GM12878 (cell line): ENCODE measurements at regions of chr5 and their contacts with region 1.

Region 1: DNA sequence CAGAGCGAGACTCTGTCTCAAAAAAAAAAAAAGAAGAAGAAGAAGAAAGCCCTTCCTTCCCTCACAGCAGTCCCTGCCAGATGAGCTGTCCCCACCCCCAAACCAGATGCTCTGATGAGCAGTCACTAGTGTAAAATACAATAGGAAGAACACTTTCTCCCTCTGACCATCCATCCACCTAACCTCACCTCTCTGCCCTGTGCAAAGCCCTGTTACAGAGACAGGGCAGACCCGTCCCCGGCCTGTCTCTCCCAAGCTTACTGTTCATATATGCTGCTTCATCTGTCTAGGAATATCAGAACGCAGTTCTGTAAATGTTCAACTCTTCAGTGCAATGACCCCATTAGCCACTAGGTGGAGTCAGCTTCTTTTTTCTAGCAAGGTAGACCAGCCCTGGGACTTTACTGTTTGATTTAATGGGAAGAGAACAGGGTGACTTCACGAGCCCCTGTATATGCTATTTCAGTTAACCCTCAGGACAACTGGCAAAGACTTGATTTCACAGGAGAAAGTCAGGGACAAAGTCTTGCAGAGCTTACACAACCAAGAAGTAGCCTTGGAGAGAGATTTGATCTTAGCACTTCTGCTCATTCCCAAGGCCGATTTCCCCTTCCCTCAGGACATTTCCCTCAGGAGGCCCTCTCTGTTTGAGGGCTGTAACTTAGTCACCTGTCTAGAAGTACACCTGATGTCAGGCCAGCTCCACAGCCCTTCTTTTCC is 14.9 kb upstream of the FGFR4 start:
- DNase-seq: peak; percentile 56
- ATAC-seq: peak; percentile 98
- H3K4me3 ChIP-seq: no peak overlapping the region
- H3K27ac ChIP-seq: no peak overlapping the region
- H3K4me1 ChIP-seq: peaks cover 10% of the 10 kb centered on the region
- H3K27me3 ChIP-seq: no peaks in the 10 kb centered on the region
- CTCF ChIP-seq: peak; percentile 87 to 90 (median 90)
- EP300 ChIP-seq: no peak
- POLR2A ChIP-seq: no peak
- RAD21 ChIP-seq: peak; percentile 63

Region 2: GRCh38 chr5:177086924-177087706 is 15.3 kb after region 1 on chr5:
- CTCF ChIA-PET with region 1: interaction called, 30 read pairs
- POLR2A ChIA-PET with region 1: interaction called, 4 read pairs
- RAD21 ChIA-PET with region 1: interaction called, 17 read pairs
- SMC1A ChIA-PET with region 1: interaction called, 10 read pairs
- in situ Hi-C with region 1: no loop called
- intact Hi-C with region 1: no loop called
- DNase-seq: peak; percentile 19
- ATAC-seq: peak; percentile 84
- H3K4me3 ChIP-seq: 0 out of 2 replicates have a peak overlapping the region, but pooled peaks have one; percentile 11
- H3K27ac ChIP-seq: no peak overlapping the region
- H3K4me1 ChIP-seq: 0 out of 2 replicates have a peak, but pooled peaks cover 2% of the 10 kb centered on the region
- H3K27me3 ChIP-seq: peaks cover 0 to 4% of the 10 kb centered on the region in 2 experiments; a peak in 3 of 4 replicates
- CTCF ChIP-seq: peak; percentile 36 to 67 (median 55); a peak in 5 of 6 replicates
- EP300 ChIP-seq: no peak
- POLR2A ChIP-seq: no peak
- RAD21 ChIP-seq: no peak

Region 3: GRCh38 chr5:177103523-177104253 is 31.9 kb after region 1 on chr5:
- CTCF ChIA-PET with region 1: interaction called, 159 read pairs
- POLR2A ChIA-PET with region 1: no interaction called
- RAD21 ChIA-PET with region 1: interaction called, 4 read pairs
- SMC1A ChIA-PET with region 1: interaction called, 4 read pairs
- in situ Hi-C with region 1: no loop called
- intact Hi-C with region 1: loop called (anchors 2 kb)
- DNase-seq: no peak
- ATAC-seq: no peak
- H3K4me3 ChIP-seq: no peak overlapping the region
- H3K27ac ChIP-seq: no peak overlapping the region
- H3K4me1 ChIP-seq: no peaks in the 10 kb centered on the region
- H3K27me3 ChIP-seq: no peaks in the 10 kb centered on the region; a peak in 1 of 4 replicates
- CTCF ChIP-seq: no peak
- EP300 ChIP-seq: no peak
- POLR2A ChIP-seq: no peak
- RAD21 ChIP-seq: no peak